ENCODE measurements at regions of chr22 and their contacts with region 1.

Region 1: DNA sequence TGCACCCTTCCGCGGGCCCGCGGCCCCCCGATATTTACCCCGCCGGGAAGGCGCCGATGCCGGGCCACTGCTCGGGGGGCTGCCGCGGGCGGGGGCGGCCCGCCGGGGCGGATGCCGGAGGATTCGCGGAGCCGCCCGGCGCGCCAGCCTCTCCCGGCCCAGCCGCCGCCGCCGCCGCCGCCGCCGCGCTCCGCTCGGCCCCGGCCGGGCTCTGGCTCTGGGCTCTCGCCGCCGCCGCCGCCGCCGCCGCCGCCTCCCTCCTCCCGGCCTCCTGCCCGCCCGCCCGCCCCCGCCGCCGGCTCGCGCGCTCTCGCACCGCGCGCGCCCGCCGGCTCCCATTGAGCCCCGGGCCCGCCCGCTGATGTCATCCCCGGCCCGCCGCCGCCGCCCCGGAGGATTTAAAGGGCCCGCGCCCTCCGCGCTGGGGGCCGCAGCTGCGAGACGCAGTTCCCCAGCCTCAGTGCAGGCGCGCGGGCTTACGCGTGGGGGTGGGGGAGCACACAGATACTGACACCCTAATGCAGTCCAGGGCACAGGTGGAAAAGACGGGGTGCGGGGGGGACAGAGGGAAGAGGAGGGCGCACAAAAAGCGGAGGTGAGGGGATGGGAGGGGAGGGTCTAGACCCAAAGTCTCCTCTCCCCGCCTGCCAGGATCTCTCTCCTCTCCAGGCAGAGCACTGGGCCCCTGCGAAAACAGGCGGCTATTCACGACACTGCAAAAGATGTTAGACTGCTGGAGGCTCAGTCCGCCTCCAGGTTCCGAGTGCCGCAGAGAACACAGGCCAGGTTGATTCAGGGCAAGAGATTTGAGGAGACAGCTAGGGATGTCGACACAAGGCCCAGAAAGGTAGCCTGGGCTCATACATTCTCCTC is at the start of gene CSNK1E:
- DNase-seq: no peak
- H3K4me3 ChIP-seq: peak within 1 kb of the TSS; percentile 83 to 95
- H3K27ac ChIP-seq: peak within 1 kb of the TSS; percentile 99
- H3K4me1 ChIP-seq: peaks cover 41% of the 10 kb centered on the region
- H3K27me3 ChIP-seq: no peaks in the 10 kb centered on the region
- CTCF ChIP-seq: no peak
- POLR2A ChIP-seq: no peak
- total RNA-seq, gene CSNK1E: 162 TPM

Region 2: GRCh38 chr22:38201710-38202436 is 115.5 kb before region 1 on chr22 and contains the start of gene MAFF:
- intact Hi-C with region 1: loop called (anchors 2 kb)
- DNase-seq: peak in 1 of 2 donors; percentile 98
- H3K4me3 ChIP-seq: peak within 1 kb of the TSS; percentile 85 to 90
- H3K27ac ChIP-seq: peak within 1 kb of the TSS; percentile 100
- H3K4me1 ChIP-seq: peaks cover 40% of the 10 kb centered on the region
- H3K27me3 ChIP-seq: no peaks in the 10 kb centered on the region
- CTCF ChIP-seq: no peak
- POLR2A ChIP-seq: peak in 1 of 2 donors; percentile 96
- total RNA-seq, gene MAFF: 90.6 TPM

Region 3: GRCh38 chr22:38272373-38273134 is 44.8 kb before region 1 on chr22 and contains the start of gene TMEM184B:
- intact Hi-C with region 1: loop called (anchors 5 kb)
- DNase-seq: no peak
- H3K4me3 ChIP-seq: peak within 1 kb of the TSS; percentile 75 to 100
- H3K27ac ChIP-seq: peak within 1 kb of the TSS; percentile 99
- H3K4me1 ChIP-seq: peaks cover 56% of the 10 kb centered on the region
- H3K27me3 ChIP-seq: no peaks in the 10 kb centered on the region
- CTCF ChIP-seq: no peak
- POLR2A ChIP-seq: peak in 1 of 2 donors; percentile 97
- total RNA-seq, gene TMEM184B: 50.8 TPM